A549 (cell line): ENCODE measurements at regions of chr17 and their contacts with region 1.

Region 1: GRCh38 chr17:76458580-76459490 is 5.9 kb upstream of the UBE2O start:
- DNase-seq: peak; percentile 78 to 91
- ATAC-seq: peak; percentile 91 to 95
- H3K4me3 ChIP-seq: no peak overlapping the region
- H3K27ac ChIP-seq: no peak overlapping the region; a peak in 1 of 6 replicates
- H3K4me1 ChIP-seq: no peaks in the 10 kb centered on the region
- CTCF ChIP-seq: peak; percentile 76
- EP300 ChIP-seq: no peak
- POLR2A ChIP-seq: no peak
- RAD21 ChIP-seq: peak; percentile 82 to 89

Region 2: DNA sequence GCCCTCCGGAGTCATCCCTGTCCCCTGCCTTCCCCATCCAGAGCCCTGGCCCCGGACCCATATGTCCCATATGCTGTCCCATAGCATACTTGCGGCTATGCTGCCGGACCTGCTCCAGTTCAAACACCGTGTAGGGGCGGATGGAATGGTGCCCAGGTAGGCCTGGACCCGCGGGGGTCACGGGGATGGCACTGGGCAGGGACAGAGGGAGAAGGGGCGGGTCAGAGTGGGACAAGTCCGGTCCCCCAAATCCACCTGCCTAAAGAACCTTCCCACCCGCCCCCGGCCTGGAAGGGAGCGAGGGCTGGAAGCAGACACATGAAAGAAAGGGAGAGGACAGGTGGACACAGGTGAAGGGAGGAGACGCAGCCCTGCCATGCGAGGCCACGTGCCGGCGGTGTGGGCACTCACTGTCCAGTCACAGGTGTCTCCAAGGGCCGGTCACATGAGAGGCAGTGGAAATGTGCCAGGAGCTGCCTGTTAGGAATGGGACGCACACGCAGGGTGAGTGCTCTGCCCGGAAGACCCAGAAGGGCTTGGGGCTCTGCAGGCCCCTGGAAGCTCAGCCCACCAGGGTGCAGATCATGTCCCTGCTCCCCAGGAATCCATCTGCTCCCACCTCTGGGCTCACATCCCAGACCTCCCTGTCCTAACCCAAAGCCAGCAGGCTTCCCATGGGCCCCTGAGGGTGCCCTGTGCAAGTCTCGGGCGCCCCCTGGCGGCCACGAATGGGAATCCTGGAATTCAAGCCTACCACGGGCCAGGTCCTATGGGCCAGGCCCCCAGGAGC is 179.7 kb before region 1 on chr17:
- CTCF ChIA-PET with region 1: no interaction called
- POLR2A ChIA-PET with region 1: no interaction called
- DNase-seq: peak; percentile 78 to 96
- ATAC-seq: peak; percentile 75 to 97
- H3K4me3 ChIP-seq: no peak overlapping the region
- H3K27ac ChIP-seq: peak overlapping the region; percentile 3; a peak in 2 of 6 replicates
- H3K4me1 ChIP-seq: peaks cover 10% of the 10 kb centered on the region
- CTCF ChIP-seq: peak; percentile 100
- EP300 ChIP-seq: no peak
- POLR2A ChIP-seq: no peak
- RAD21 ChIP-seq: peak; percentile 99

Region 3: GRCh38 chr17:76296186-76296585 is 162.6 kb before region 1 on chr17:
- CTCF ChIA-PET with region 1: interaction called, 15 read pairs
- POLR2A ChIA-PET with region 1: no interaction called
- DNase-seq: no peak
- ATAC-seq: no peak
- H3K4me3 ChIP-seq: no peak overlapping the region
- H3K27ac ChIP-seq: no peak overlapping the region
- H3K4me1 ChIP-seq: no peaks in the 10 kb centered on the region
- CTCF ChIP-seq: no peak
- EP300 ChIP-seq: no peak
- POLR2A ChIP-seq: no peak
- RAD21 ChIP-seq: no peak

Region 4: GRCh38 chr17:76365256-76365903 is 93.5 kb before region 1 on chr17:
- CTCF ChIA-PET with region 1: interaction called, 13 read pairs
- POLR2A ChIA-PET with region 1: no interaction called
- DNase-seq: no peak
- ATAC-seq: peak; percentile 48 to 79; a peak in 3 of 6 replicates
- H3K4me3 ChIP-seq: no peak overlapping the region
- H3K27ac ChIP-seq: no peak overlapping the region
- H3K4me1 ChIP-seq: no peaks in the 10 kb centered on the region
- CTCF ChIP-seq: peak; percentile 58
- EP300 ChIP-seq: no peak
- POLR2A ChIP-seq: no peak
- RAD21 ChIP-seq: peak in 1 of 2 experiments; percentile 58; a peak in 2 of 5 replicates

Region 5: DNA sequence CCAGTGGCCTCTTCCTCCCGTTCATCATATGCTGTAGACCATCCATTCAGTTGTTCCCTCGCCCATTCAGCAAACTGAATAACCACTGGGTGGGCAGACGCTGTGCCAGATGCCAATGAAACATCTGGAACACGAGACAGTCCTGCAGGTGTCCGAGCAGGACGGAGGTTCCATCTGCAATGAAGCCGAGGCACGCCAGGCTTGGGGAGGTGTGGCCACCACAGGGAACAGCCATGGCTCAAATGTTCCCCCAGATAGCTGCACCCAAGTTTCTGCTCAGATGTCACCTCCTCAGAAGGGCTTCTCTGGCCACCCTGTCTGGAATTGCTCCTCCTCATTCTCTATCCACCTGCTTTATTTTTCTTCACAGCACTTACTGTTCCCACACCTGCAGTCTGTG is 36.4 kb before region 1 on chr17:
- CTCF ChIA-PET with region 1: interaction called, 1,107 read pairs
- POLR2A ChIA-PET with region 1: no interaction called
- DNase-seq: no peak
- ATAC-seq: no peak
- H3K4me3 ChIP-seq: no peak overlapping the region
- H3K27ac ChIP-seq: no peak overlapping the region
- H3K4me1 ChIP-seq: peaks cover 3% of the 10 kb centered on the region
- CTCF ChIP-seq: no peak
- EP300 ChIP-seq: no peak
- POLR2A ChIP-seq: no peak
- RAD21 ChIP-seq: no peak

Region 6: GRCh38 chr17:76437467-76438402 is 21.1 kb before region 1 on chr17:
- CTCF ChIA-PET with region 1: interaction called, 1,994 read pairs
- POLR2A ChIA-PET with region 1: no interaction called
- DNase-seq: no peak
- ATAC-seq: no peak
- H3K4me3 ChIP-seq: no peak overlapping the region
- H3K27ac ChIP-seq: 0 out of 6 replicates have a peak overlapping the region, but pooled peaks of 1 of the 2 experiments have one; percentile 12
- H3K4me1 ChIP-seq: peaks cover 30% of the 10 kb centered on the region
- CTCF ChIP-seq: no peak
- EP300 ChIP-seq: no peak
- POLR2A ChIP-seq: no peak
- RAD21 ChIP-seq: no peak